ENCODE measurements at regions of chr10 and their contacts with region 1.

Region 1: GRCh38 chr10:114486938-114487814 is 82.9 kb upstream of the AFAP1L2 start:
- DNase-seq: no peak
- ATAC-seq: no peak
- H3K4me3 ChIP-seq: no peak overlapping the region
- H3K27ac ChIP-seq: peak overlapping the region in 4 of 12 donors; percentile 5 to 80 (median 21)
- H3K4me1 ChIP-seq: peaks cover 9 to 92% (median 57%) of the 10 kb centered on the region in 12 donors
- H3K27me3 ChIP-seq: no peaks in the 10 kb centered on the region
- CTCF ChIP-seq: no peak
- POLR2A ChIP-seq: no peak

Region 2: DNA sequence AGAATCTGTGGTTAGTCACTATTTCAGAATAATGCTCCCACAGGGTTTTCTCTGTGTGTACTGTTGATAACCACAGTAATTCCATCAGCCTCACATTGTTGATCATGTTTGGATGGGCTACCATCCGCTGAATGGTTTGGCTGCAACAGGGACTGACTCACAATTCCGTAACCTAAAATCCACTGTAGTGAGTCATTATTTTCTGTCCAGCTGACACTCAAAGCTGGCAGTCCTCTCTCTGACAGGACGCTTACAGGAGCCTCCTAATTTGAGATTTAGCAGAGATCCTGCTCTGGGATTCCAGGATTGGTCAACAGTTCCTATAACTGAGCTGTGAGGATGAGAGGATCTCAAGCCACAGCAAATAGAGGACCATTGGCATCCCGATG is 215.4 kb before region 1 on chr10:
- intact Hi-C with region 1: no loop called
- DNase-seq: peak; percentile 7 to 64 (median 44)
- ATAC-seq: peak; percentile 58 to 95 (median 89)
- H3K4me3 ChIP-seq: no peak overlapping the region
- H3K27ac ChIP-seq: peak overlapping the region in 5 of 12 donors; percentile 14 to 57 (median 29)
- H3K4me1 ChIP-seq: peaks cover 0 to 25% (median 5%) of the 10 kb centered on the region in 12 donors
- H3K27me3 ChIP-seq: no peaks in the 10 kb centered on the region
- CTCF ChIP-seq: no peak
- POLR2A ChIP-seq: no peak

Region 3: GRCh38 chr10:114427124-114427852 is 59.9 kb before region 1 on chr10:
- intact Hi-C with region 1: no loop called
- DNase-seq: no peak
- ATAC-seq: peak; percentile 29 to 59 (median 38)
- H3K4me3 ChIP-seq: no peak overlapping the region
- H3K27ac ChIP-seq: peak overlapping the region in 11 of 12 donors; percentile 27 to 77 (median 55)
- H3K4me1 ChIP-seq: peaks cover 0 to 30% (median 13%) of the 10 kb centered on the region in 12 donors
- H3K27me3 ChIP-seq: no peaks in the 10 kb centered on the region
- CTCF ChIP-seq: peak in 6 of 12 donors; percentile 16 to 44 (median 24)
- POLR2A ChIP-seq: no peak

Region 4: GRCh38 chr10:114631666-114632417 is 144.7 kb after region 1 on chr10:
- intact Hi-C with region 1: loop called in 1 of 10 experiments (anchors 10 kb)
- DNase-seq: peak; percentile 52 to 71 (median 67)
- ATAC-seq: peak; percentile 17 to 68 (median 56)
- H3K4me3 ChIP-seq: peak overlapping the region; percentile 40 to 85 (median 68)
- H3K27ac ChIP-seq: peak overlapping the region; percentile 80 to 96 (median 90)
- H3K4me1 ChIP-seq: peaks cover 0 to 87% (median 50%) of the 10 kb centered on the region in 12 donors
- H3K27me3 ChIP-seq: peaks cover 0 to 21% (median 0%) of the 10 kb centered on the region in 9 donors
- CTCF ChIP-seq: no peak
- POLR2A ChIP-seq: peak in 1 of 2 donors; percentile 49

Measured in heart left ventricle (tissue), 16 donors.